ENCODE measurements at regions of chr7 and their contacts with region 1.

Region 1: GRCh38 chr7:120987683-120988590 is 574 bp upstream of the CPED1 start:
- DNase-seq: peak; percentile 89
- H3K4me3 ChIP-seq: peak overlapping the region; percentile 39 to 80 (median 64)
- H3K27ac ChIP-seq: no peak overlapping the region
- H3K4me1 ChIP-seq: peaks cover 10% of the 10 kb centered on the region
- H3K27me3 ChIP-seq: peaks cover 0 to 9% of the 10 kb centered on the region in 2 experiments
- CTCF ChIP-seq: peak; percentile 95 to 97
- POLR2A ChIP-seq: no peak

Region 2: DNA sequence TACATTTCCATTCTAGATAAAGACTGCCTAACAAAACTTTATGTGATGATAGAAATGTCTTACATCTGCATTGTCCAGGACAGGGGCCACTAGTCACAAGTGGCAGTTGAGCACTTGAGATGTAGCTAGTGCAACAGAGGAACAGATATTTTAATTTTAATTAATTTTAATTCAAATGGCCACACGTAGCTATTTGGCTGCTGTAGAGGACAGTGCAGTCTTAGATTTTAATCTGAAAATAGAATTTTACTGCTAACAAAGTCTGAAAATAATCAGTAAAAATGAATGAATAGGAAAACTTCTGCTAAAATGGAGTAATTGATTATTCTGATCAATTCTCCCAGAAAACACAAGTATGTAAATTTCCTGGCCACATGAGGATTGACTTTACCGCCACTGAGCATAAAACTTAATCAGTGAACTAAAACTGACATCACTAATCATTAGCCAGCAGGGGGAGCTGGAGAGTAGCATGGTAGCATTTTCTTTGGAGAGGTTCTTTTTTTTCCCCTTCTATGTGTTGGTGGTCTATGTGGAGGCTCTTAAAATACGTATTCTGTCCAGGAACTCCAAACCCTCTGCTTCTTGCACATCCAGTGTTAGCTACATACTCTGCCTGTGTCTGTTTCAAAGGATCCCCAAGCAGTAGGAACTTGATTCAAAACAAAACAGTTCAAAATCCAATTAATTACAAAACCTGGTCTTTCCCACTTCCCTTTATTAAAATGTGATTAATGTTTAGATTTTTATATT is 182.1 kb before region 1 on chr7:
- CTCF ChIA-PET with region 1: interaction called, 11 read pairs
- POLR2A ChIA-PET with region 1: no interaction called
- dilution Hi-C with region 1: no loop called
- intact Hi-C with region 1: loop called (anchors 1 kb)
- DNase-seq: peak; percentile 80
- H3K4me3 ChIP-seq: no peak overlapping the region
- H3K27ac ChIP-seq: no peak overlapping the region
- H3K4me1 ChIP-seq: peaks cover 12% of the 10 kb centered on the region
- H3K27me3 ChIP-seq: no peaks in the 10 kb centered on the region
- CTCF ChIP-seq: peak; percentile 67 to 77
- POLR2A ChIP-seq: no peak

Region 3: GRCh38 chr7:120950539-120951308 is 37.2 kb before region 1 on chr7 and contains the start of gene ING3:
- CTCF ChIA-PET with region 1: interaction called, 7 read pairs
- POLR2A ChIA-PET with region 1: interaction called, 4 read pairs
- dilution Hi-C with region 1: no loop called
- intact Hi-C with region 1: loop called (anchors 1 kb)
- DNase-seq: peak; percentile 98
- H3K4me3 ChIP-seq: peak within 1 kb of the TSS; percentile 57 to 100 (median 98)
- H3K27ac ChIP-seq: peak within 1 kb of the TSS; percentile 96
- H3K4me1 ChIP-seq: peaks cover 18% of the 10 kb centered on the region
- H3K27me3 ChIP-seq: no peaks in the 10 kb centered on the region
- CTCF ChIP-seq: no peak
- POLR2A ChIP-seq: peak; percentile 82
- total RNA-seq, gene ING3: 19.4 and 19.6 TPM in 2 replicates

Region 4: DNA sequence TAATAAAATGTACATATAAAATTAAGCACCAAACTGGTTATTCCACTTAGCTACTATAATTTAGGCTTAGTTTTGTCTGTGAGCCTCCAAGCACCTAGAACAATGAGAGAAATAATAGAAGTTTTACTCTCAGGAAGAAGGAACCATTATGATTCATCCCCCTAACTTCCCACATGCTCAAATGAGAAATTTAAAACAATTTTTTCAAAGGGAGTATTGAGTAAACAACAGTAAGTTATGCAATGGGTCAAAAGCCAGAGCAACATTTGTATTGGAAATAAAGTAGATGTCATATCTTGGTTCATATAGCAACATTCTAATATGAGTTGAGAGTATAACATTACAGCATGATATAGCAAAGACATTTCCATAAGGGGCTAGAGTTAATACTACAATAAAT is 32.7 kb after region 1 on chr7:
- CTCF ChIA-PET with region 1: interaction called, 10 read pairs
- POLR2A ChIA-PET with region 1: no interaction called
- dilution Hi-C with region 1: no loop called
- intact Hi-C with region 1: loop called (anchors 1 kb)
- DNase-seq: peak; percentile 85
- H3K4me3 ChIP-seq: no peak overlapping the region
- H3K27ac ChIP-seq: peak overlapping the region; percentile 50
- H3K4me1 ChIP-seq: peaks cover 23% of the 10 kb centered on the region
- H3K27me3 ChIP-seq: no peaks in the 10 kb centered on the region
- CTCF ChIP-seq: no peak
- POLR2A ChIP-seq: no peak

Region 5: GRCh38 chr7:121099572-121099971 is 111.6 kb after region 1 on chr7:
- CTCF ChIA-PET with region 1: interaction called, 18 read pairs
- POLR2A ChIA-PET with region 1: no interaction called
- dilution Hi-C with region 1: loop called (anchors 25 kb)
- intact Hi-C with region 1: no loop called
- DNase-seq: no peak
- H3K4me3 ChIP-seq: no peak overlapping the region
- H3K27ac ChIP-seq: no peak overlapping the region
- H3K4me1 ChIP-seq: no peaks in the 10 kb centered on the region
- H3K27me3 ChIP-seq: no peaks in the 10 kb centered on the region
- CTCF ChIP-seq: no peak
- POLR2A ChIP-seq: no peak

Region 6: GRCh38 chr7:121107923-121108498 is 120.1 kb after region 1 on chr7:
- CTCF ChIA-PET with region 1: interaction called, 125 read pairs
- POLR2A ChIA-PET with region 1: no interaction called
- dilution Hi-C with region 1: no loop called
- intact Hi-C with region 1: loop called (anchors 1 kb)
- DNase-seq: peak; percentile 78
- H3K4me3 ChIP-seq: no peak overlapping the region
- H3K27ac ChIP-seq: no peak overlapping the region
- H3K4me1 ChIP-seq: no peaks in the 10 kb centered on the region
- H3K27me3 ChIP-seq: peaks cover 12 to 16% of the 10 kb centered on the region in 2 experiments
- CTCF ChIP-seq: peak; percentile 57 to 59
- POLR2A ChIP-seq: no peak